KBM-7 (cell line): ENCODE measurements at regions of chrX and their contacts with region 1.

Region 1: GRCh38 chrX:73863268-73863667 is 300.3 kb downstream of the CHIC1 start:
- DNase-seq: no peak

Region 2: DNA sequence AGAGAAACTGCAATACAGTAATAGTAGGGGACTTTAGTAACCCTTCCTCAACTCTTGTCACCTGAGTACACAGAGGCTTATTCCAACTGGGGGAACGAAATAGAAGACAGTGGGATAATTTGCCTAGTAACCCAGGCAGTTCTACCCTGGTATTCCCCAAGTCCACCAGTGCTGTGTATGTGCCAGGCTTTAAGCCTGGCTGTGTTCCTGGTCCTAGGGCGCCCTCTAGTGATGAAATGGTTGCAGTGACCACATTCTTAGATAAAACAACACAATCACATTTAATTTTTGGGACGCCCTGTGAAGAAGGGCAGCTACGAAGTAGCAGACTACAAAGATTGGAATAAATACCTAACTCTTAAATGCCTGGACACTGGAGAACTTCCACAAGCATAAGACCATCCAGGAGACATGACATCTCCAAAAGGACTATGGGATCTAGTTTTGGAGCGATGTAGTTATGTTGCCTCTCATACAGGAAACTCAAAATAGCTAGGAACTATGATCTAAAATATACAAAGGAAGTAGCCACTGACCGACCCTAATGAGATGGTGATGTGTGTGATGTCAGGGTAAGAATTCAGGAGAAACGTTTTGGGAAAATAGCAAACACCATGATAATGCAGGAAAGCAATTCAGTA is 152.2 kb after region 1 on chrX:
- in situ Hi-C with region 1: loop called (anchors 10 kb)
- DNase-seq: peak; percentile 89